ENCODE measurements at regions of chr5 and their contacts with region 1.

Region 1: DNA sequence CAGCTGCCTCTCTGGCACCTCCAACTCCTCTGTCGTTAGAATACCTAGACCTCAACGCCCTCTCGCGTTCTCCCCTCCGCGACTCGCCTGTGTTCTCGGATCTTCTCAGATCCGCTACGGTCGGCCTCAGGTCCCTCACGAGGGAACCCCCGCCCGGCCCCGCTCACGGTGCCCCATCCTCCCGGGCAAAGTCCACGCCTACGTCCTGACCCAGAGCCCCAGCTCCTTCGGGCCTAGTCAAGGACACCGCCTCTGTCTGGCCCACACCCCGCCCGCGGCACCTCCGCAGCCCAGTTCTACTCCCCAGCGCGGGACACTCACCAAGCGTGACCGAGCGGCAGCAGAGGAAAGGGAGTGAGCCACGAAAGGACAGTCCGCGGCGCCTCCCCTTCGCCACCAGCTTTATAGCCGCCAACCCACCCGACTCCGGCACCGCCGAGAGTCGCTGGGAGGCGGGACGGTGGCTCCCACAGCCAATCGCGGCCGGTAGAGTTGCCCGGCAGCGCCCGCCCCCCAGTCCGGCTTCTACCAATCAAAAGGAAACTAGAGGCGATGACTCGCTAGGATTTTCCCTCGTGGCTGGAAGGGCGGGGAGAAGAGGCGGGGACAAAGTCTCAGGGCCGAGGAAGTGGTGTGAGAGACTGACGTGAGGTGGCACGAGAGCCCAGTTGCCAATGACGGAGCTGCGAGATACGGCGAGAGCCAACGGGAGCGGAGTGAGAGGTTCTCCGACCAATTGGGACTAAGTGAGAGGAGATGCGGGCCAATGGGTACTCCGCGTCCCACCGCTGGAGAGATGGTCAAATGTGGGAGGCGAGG is at the start of gene HMGCS1:
- DNase-seq: peak; percentile 99
- H3K4me3 ChIP-seq: peak within 1 kb of the TSS; percentile 77
- H3K27ac ChIP-seq: peak within 1 kb of the TSS; percentile 84
- H3K4me1 ChIP-seq: peaks cover 5% of the 10 kb centered on the region
- H3K27me3 ChIP-seq: no peaks in the 10 kb centered on the region
- CTCF ChIP-seq: no peak
- total RNA-seq, gene HMGCS1: 95.1 to 498 TPM

Region 2: GRCh38 chr5:43120720-43121564 is 192.3 kb before region 1 on chr5 and contains the start of gene ZNF131:
- intact Hi-C with region 1: loop called (anchors 5 kb)
- DNase-seq: peak; percentile 97
- H3K4me3 ChIP-seq: peak within 1 kb of the TSS; percentile 84
- H3K27ac ChIP-seq: peak within 1 kb of the TSS; percentile 96
- H3K4me1 ChIP-seq: peaks cover 4% of the 10 kb centered on the region
- H3K27me3 ChIP-seq: no peaks in the 10 kb centered on the region
- CTCF ChIP-seq: no peak
- total RNA-seq, gene ZNF131: 21.8 to 23.5 TPM

Measured in colonic mucosa (tissue), 4 donors.